ENCODE measurements at regions of chr4 and their contacts with region 1.

Region 1: GRCh38 chr4:2923141-2923551 is 40.1 kb downstream of the NOP14 start:
- DNase-seq: no peak
- H3K4me3 ChIP-seq: no peak overlapping the region; a peak in 1 of 8 replicates
- H3K27ac ChIP-seq: peak overlapping the region; percentile 49; the same call in 1 of the 2 replicates
- H3K4me1 ChIP-seq: peaks cover 3 to 14% (median 8%) of the 10 kb centered on the region in 4 experiments; a peak in 6 of 7 replicates
- H3K27me3 ChIP-seq: no peaks in the 10 kb centered on the region
- CTCF ChIP-seq: no peak
- EP300 ChIP-seq: no peak
- POLR2A ChIP-seq: no peak
- RAD21 ChIP-seq: no peak

Region 2: GRCh38 chr4:2878346-2878745 is 44.8 kb before region 1 on chr4:
- CTCF ChIA-PET with region 1: no interaction called
- POLR2A ChIA-PET with region 1: no interaction called
- DNase-seq: no peak
- H3K4me3 ChIP-seq: no peak overlapping the region
- H3K27ac ChIP-seq: no peak overlapping the region
- H3K4me1 ChIP-seq: peaks cover 0 to 5% (median 2%) of the 10 kb centered on the region in 4 experiments; a peak in 4 of 7 replicates
- H3K27me3 ChIP-seq: no peaks in the 10 kb centered on the region
- CTCF ChIP-seq: no peak
- EP300 ChIP-seq: no peak
- POLR2A ChIP-seq: no peak
- RAD21 ChIP-seq: no peak

Region 3: DNA sequence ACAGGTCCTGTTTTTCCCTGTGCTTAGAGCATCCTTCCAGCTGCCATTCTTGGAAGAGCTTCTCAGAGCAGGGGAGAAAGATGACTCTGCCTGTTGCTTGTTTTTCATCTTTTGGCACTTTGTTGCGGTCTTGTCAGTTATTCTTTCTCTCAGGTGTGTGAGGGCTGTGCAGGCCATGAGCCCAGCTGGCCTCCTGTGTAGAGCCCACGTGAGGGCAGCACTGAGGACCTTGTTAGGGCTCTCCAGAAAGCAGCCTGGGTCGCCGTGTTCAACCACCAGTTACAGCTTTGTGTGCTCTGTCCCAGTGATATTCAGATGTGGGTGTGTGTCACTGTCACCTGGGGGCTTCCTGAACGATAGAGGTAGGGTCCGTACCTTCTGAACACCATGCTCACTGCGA is 12.7 kb before region 1 on chr4:
- CTCF ChIA-PET with region 1: interaction called, 13 read pairs
- POLR2A ChIA-PET with region 1: interaction called, 9 read pairs
- DNase-seq: no peak
- H3K4me3 ChIP-seq: no peak overlapping the region
- H3K27ac ChIP-seq: no peak overlapping the region
- H3K4me1 ChIP-seq: no peaks in the 10 kb centered on the region
- H3K27me3 ChIP-seq: no peaks in the 10 kb centered on the region
- CTCF ChIP-seq: peak; percentile 50 to 62 (median 57)
- EP300 ChIP-seq: no peak
- POLR2A ChIP-seq: no peak
- RAD21 ChIP-seq: peak; percentile 27 to 59; a peak in 3 of 4 replicates

Region 4: GRCh38 chr4:2934813-2935761 is 11.9 kb after region 1 on chr4:
- CTCF ChIA-PET with region 1: interaction called, 4 read pairs
- POLR2A ChIA-PET with region 1: interaction called, 45 read pairs
- DNase-seq: peak; percentile 49 to 97
- H3K4me3 ChIP-seq: peak overlapping the region; percentile 79 to 83 (median 82)
- H3K27ac ChIP-seq: peak overlapping the region; percentile 73; the same call in 1 of the 2 replicates
- H3K4me1 ChIP-seq: peaks cover 0 to 14% (median 7%) of the 10 kb centered on the region in 4 experiments; a peak in 6 of 7 replicates
- H3K27me3 ChIP-seq: no peaks in the 10 kb centered on the region
- CTCF ChIP-seq: no peak
- EP300 ChIP-seq: no peak
- POLR2A ChIP-seq: peak in 1 of 2 experiments; percentile 91; a peak in 2 of 3 replicates
- RAD21 ChIP-seq: no peak

Measured in H1 (cell line).